Colonic mucosa (tissue), 4 donors: ENCODE measurements at regions of chr3 and their contacts with region 1.

Region 1: DNA sequence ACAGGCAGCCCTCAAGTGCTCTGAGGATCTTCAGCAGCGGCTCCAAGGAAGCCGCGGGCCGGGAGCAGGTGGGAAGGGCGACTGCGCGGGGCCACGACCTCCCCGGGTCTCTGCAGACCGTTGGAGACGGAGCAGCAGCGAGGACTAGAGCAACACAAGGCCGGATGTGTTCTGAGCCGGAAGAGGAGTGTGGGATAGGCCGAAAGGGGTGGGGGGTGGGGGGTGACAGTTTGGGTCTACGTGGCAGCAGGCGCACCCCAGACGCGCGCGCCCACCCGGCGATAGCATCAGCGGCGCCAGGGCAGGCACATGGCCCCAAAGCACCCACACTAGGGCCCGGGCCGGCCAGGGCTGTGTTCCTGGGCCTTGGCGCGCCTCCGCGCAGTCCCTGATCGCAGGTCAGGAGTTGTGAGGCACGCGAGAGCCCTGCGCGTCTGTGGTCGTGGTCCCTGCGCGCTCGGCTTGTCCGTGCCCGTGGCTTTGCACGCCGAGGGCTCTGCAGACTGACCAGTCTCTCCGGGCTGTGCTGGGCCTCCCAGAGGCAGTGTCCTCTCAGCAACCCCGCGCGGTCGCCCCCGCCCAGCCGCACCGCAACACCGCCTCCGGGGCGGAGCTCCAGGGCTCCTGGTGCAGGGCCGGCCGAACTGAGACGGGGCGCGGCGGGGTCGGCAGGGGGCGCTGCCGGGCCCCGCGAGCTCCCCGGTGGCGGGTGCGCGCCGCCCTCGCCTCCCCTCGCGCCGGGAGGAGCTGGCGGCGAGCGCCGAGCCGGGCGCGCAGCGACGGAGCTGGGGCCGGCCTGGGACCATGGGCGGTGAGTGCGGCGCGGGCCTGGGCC is at the start of gene PXYLP1:
- DNase-seq: peak; percentile 95
- H3K4me3 ChIP-seq: peak within 1 kb of the TSS; percentile 84
- H3K27ac ChIP-seq: peak within 1 kb of the TSS; percentile 88
- H3K4me1 ChIP-seq: peaks cover 4% of the 10 kb centered on the region
- H3K27me3 ChIP-seq: no peaks in the 10 kb centered on the region
- CTCF ChIP-seq: peak; percentile 36
- total RNA-seq, gene PXYLP1: 8.9 to 13.1 TPM

Region 2: DNA sequence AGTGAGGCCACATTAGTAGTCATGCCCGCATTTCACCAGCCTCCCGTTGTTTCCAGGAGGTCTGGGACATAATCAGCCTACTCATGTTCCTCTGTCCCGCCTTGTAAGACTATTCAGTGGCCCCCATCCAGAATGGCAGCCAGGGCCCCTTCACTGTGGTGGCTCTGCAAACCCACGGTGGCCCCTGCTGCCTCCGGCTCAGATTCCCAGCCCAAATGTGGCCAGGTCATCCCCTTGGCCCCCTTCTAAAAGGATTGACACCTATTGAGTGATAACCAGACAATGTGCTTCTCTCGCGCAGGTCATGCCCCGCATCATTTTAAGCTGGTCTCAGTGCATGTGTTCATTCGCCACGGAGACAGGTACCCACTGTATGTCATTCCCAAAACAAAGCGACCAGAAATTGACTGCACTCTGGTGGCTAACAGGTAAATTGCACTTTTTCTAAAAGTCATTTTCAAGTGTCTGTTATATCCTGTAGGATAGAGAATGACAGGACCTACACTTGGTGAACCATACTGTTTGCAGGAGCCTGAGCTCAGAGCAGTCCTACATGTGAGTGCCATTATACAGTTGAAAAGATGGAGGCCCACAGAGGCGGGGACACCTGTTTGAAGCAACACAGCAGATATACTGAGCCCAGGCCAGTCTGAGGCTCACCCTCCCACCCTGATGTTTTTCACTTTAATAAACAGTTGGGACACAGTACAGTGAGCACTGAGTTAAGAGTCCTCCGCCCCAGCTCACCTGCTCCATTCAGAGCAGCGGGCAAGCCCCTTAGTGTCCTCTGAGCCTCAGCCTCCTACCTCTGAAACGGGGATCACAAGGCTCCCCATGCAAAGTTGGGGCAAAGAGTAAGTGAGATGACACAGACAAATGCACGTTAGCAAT is 48.0 kb after region 1 on chr3:
- intact Hi-C with region 1: loop called (anchors 5 kb)
- DNase-seq: no peak
- H3K4me3 ChIP-seq: no peak overlapping the region
- H3K27ac ChIP-seq: no peak overlapping the region
- H3K4me1 ChIP-seq: no peaks in the 10 kb centered on the region
- H3K27me3 ChIP-seq: no peaks in the 10 kb centered on the region
- CTCF ChIP-seq: peak; percentile 44

Region 3: DNA sequence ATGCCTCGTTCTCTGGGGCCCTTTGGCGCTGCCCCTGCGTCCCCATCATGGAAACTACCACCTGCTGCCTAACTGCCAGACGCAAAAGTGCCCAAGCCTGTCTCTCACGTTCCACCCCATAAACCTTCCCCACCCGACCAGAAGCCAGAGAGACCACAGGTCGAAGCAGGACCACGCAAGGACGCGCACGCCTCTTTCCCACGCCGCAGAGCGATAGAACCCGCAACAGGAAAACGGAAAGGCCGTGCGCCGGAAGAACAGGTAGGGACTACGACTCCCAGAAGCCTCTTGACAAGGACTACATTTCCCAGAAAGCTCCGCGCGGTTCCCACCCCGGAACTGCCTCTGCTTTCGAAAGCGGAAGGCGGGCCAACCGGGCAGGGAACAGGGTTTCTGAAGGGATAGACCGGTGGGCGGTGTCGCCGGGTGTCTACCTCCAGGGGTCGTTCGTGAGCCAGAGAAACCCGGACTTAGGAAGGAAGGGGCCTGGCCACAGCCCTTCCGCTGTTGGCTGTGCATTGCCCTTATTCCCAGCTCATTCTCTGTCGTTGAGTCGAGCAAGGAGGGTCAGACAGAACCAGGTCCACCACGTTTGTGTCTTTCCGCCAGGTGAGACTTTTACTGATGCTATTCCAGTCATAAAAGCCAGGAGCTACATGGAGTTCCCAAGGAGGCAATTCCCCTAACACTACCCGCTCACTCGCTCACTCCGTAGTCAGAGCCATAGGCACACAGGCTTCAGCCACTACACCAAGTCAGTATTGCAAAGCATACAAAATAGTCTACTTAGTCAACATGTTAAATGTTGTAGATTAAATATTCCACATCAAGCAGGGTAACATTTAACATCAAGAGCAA is 80.4 kb after region 1 on chr3:
- intact Hi-C with region 1: no loop called
- DNase-seq: peak; percentile 100
- H3K4me3 ChIP-seq: peak overlapping the region; percentile 56
- H3K27ac ChIP-seq: peak overlapping the region; percentile 77
- H3K4me1 ChIP-seq: no peaks in the 10 kb centered on the region
- H3K27me3 ChIP-seq: no peaks in the 10 kb centered on the region
- CTCF ChIP-seq: peak; percentile 86